Transverse colon (tissue), 4 donors: ENCODE measurements at regions of chr10 and their contacts with region 1.

Region 1: DNA sequence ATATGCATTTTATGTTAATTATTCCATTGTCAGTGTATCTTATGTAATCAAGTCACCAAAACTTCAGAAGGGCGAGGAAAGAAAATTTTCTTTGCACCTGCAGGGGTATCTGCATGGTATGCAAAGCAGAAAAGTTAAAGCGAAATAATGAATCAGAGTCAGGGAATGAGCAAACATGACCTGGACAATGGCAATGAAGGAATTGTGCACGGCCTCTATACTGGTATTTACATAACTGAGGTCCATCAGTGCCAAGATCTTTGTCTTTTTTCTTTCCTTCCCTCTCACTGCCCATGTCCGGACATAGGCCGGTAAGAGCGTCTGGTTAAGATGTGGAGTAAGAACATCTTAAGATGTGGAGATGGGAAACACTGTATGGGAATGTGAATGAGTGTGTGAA is 14.4 kb upstream of the AKR1C3 start:
- DNase-seq: no peak
- H3K4me3 ChIP-seq: no peak overlapping the region
- H3K27ac ChIP-seq: no peak overlapping the region
- H3K4me1 ChIP-seq: no peaks in the 10 kb centered on the region
- H3K27me3 ChIP-seq: no peaks in the 10 kb centered on the region
- CTCF ChIP-seq: no peak
- EP300 ChIP-seq: no peak
- POLR2A ChIP-seq: no peak

Region 2: DNA sequence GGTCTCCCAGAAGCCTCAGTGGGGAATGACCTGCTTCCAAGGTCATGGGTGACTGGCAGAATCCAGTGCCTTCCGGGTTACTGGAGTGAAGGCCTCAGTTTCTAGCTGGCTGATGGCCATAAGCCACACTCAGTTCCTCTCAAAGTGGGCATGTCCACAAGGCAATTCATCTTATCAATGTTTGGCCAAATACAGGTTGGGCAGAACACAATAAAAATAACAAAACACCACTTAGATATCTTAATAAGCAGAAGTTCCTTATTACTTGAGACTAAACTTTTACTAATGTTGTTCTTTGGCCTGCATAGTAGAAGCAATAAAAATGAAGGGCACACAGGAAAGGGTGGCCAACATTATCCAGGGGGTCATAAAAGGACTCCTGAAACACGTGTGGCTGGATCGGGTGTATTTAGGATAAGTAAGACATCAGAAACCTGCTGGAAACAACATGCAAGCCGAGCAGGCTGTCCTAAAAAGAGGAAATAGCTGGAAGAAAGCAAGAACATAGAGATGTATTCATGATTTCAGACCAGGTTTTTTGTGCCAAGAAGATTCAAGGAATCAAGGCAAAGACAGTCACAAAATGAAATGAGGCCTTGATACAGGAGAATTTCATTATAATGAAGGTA is 56.5 kb before region 1 on chr10:
- in situ Hi-C with region 1: no loop called
- intact Hi-C with region 1: loop called (anchors 2 kb)
- DNase-seq: peak; percentile 71
- H3K4me3 ChIP-seq: no peak overlapping the region
- H3K27ac ChIP-seq: peak overlapping the region; percentile 66 to 81 (median 75)
- H3K4me1 ChIP-seq: peaks cover 10 to 47% (median 25%) of the 10 kb centered on the region in 4 donors
- H3K27me3 ChIP-seq: no peaks in the 10 kb centered on the region
- CTCF ChIP-seq: no peak
- EP300 ChIP-seq: no peak
- POLR2A ChIP-seq: no peak

Region 3: DNA sequence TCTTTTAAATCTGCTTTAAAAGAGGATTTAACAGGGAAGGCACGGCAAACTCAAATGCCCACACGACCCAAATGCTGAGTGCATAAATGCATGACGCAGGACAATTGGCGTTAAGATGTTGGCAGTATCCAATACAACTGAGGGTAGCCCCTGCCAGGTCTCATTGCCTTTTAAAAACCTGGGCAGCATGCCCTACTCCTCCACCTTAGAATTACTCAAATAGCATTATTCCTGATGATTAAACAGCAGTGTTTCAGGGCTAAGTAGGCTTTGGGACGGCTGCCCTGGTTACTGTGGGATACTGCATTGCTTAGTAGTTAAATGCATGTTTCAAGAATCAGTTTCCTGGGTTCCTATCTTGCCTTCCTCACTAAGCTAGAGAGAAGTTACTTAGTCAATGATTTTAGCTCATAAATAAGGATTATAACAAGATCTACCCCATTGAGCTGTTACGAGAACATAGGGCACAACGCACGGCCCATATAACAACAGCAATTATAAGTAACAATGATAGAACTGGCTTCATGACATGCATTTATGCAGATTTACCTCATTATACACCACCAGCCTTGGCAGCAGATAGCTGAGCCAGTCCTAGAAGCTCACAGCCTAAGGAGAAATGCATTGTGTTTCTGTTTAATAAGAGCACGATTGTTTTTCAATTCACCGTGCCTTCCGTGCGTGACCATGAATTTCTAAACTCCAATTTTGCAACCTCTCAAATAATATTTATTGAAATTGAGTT is 316.9 kb after region 1 on chr10:
- in situ Hi-C with region 1: no loop called
- intact Hi-C with region 1: no loop called
- DNase-seq: no peak
- H3K4me3 ChIP-seq: no peak overlapping the region
- H3K27ac ChIP-seq: no peak overlapping the region
- H3K4me1 ChIP-seq: no peaks in the 10 kb centered on the region
- H3K27me3 ChIP-seq: no peaks in the 10 kb centered on the region
- CTCF ChIP-seq: no peak
- EP300 ChIP-seq: no peak
- POLR2A ChIP-seq: no peak